Esophagus squamous epithelium (tissue), 5 donors: ENCODE measurements at regions of chr10 and their contacts with region 1.

Region 1: GRCh38 chr10:99560277-99561126 is 27.8 kb downstream of the NKX2-3 start:
- DNase-seq: no peak
- H3K4me3 ChIP-seq: no peak overlapping the region
- H3K27ac ChIP-seq: no peak overlapping the region
- H3K4me1 ChIP-seq: no peaks in the 10 kb centered on the region
- H3K27me3 ChIP-seq: peaks cover 0 to 31% (median 0%) of the 10 kb centered on the region in 4 donors
- CTCF ChIP-seq: peak; percentile 53 to 83 (median 76)
- POLR2A ChIP-seq: no peak

Region 2: DNA sequence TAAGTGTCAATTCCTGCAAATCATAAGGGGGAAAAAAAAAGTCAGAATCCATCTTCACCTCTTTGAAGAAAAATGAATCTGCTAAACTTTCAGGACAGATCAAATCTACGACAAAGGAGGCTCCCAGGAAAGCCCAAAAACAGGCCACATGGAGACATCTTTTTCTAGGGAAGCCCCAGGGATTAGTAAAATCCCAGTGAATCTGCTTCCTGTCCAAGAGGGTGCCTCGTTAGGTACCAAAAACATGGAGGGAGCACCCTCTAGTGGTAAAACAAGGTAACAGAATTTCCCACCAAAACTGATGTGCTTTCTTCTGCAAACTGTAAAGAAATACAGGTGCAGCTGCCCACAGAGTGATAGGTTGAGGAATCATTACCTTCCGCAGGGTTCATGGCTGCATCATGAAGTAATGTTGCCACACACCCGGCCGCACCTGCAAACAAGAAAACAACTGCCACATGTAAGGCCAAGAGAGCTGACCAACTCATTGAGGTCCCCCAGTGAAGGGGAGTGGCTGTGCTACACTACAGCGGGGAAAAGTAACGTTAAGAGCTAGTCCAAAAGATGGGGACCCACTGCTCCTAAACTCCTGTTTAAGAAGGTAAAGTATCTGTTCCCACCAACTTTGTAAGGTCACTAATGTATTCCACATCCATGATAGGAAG is 51.8 kb after region 1 on chr10:
- intact Hi-C with region 1: loop called (anchors 5 kb)
- DNase-seq: no peak
- H3K4me3 ChIP-seq: no peak overlapping the region
- H3K27ac ChIP-seq: no peak overlapping the region
- H3K4me1 ChIP-seq: peaks cover 0 to 48% (median 22%) of the 10 kb centered on the region in 3 donors
- H3K27me3 ChIP-seq: no peaks in the 10 kb centered on the region
- CTCF ChIP-seq: peak; percentile 74 to 89 (median 77)
- POLR2A ChIP-seq: no peak

Region 3: DNA sequence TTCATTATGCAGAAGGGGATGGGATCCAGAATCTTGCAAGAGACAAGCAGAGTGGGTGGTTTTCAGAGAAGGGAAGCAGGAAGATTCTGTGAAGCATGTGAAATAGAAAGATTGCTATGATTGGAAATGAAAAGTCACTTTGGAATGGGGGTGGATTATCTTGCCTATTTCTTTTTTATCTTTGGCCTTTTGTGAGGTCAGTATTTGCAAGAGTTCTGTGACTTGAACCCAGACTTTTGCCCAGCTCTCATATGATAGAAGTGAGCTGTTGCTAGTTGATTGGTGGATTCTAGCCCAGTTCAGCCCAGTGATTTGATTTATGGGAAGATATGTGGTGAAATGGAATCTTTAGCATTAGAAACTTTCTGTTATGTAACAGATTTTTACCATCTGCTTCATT is 115.9 kb after region 1 on chr10:
- intact Hi-C with region 1: no loop called
- DNase-seq: no peak
- H3K4me3 ChIP-seq: no peak overlapping the region
- H3K27ac ChIP-seq: no peak overlapping the region
- H3K4me1 ChIP-seq: peaks cover 0 to 13% (median 4%) of the 10 kb centered on the region in 3 donors
- H3K27me3 ChIP-seq: no peaks in the 10 kb centered on the region
- CTCF ChIP-seq: no peak
- POLR2A ChIP-seq: no peak